Activated naive CD4-positive, alpha-beta T cell treated with anti-CD3 and anti-CD28 coated beads for 36 hours (primary cell): ENCODE measurements at regions of chr19 and their contacts with region 1.

Region 1: DNA sequence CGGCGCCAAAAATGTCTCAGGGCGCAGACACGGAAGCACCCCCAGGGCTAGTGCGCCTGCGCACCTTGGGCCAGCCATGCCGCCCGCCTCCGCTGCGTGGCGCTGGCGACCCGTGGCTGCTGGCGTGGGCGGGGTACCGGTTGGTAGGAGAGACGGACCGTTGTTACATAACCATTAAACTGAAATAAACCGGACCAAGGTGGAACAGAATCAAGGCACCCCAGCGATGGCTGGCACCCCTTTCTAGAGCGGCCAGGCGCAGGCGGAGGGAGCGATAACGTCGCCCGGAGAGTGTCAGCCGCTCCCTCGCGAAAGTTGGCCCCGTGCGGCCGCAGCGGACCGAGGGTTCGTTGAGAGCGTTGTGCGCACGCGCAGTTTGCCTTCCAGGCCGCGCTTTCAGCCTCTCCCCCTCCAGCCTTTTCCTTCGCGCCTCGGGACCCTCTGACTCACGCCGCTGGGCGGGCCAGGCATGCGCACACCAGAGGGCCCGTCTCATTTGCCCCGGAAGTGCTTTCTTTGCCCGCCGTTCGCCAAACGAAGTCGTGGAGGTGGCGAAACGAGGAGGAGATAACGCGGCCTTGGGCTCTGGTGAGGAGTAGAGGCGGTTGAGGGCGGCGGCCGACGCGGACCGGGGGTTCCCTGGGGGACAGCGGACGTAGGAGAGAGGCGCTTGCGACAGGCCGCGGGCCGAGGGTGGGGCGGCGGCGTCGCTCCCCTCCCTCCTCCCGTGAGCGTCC is at the starts of genes PLEKHJ1 and SF3A2:
- DNase-seq: peak; percentile 98
- H3K4me3 Mint-ChIP-seq: peak within 1 kb of the TSS; percentile 99
- H3K27ac Mint-ChIP-seq: peak within 1 kb of the TSS; percentile 98
- H3K4me1 Mint-ChIP-seq: peaks cover 64% of the 10 kb centered on the region
- H3K27me3 Mint-ChIP-seq: no peaks in the 10 kb centered on the region
- total RNA-seq, gene PLEKHJ1: 56.9 to 60.6 TPM
- total RNA-seq, gene SF3A2: 154 to 158 TPM

Region 2: DNA sequence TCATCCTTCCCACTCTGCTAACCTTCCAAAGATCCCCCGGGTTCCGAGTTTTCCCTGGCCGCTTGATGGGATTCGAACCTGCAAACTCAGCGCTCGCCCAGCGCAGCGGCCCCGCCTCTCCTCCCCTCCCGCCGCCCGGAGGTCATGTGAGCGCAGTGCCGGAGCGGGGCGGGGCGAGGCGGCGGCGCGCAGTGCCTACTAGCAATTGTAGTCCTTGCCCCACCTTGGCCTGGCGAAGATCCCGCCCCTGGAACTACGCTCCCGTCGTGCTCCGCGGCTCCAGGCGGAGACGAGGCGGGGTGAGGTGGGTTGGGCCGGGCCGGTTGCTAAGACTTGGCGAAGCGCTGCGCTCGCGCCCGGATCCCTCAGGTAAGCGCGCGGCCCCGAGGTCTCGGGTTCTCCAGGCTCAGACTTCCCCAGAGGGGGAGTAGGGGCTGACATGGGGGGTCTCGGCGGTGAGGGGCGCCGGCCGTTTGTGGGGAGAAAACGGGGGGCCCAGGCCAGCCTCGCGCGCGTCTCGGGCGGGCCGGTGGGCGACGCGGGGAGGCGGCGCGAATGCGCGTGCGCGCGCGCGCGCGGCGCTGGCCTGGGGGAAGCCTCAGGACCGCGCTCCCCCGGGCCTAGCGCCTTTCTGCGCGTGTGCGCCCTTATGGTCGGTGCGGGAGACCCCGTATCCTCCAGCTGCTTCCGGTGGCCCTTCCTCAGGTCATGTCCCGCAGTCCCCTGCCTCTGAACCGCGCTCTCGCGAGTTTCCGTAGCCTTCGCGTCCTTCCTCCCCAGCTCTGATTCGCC is 331.2 kb before region 1 on chr19 and contains the starts of genes ADAT3 and SCAMP4:
- CTCF ChIA-PET with region 1: no interaction called
- intact Hi-C with region 1: loop called (anchors 2 kb)
- DNase-seq: peak; percentile 99
- H3K4me3 Mint-ChIP-seq: peak within 1 kb of the TSS; percentile 89
- H3K27ac Mint-ChIP-seq: peak within 1 kb of the TSS; percentile 89
- H3K4me1 Mint-ChIP-seq: peaks cover 46% of the 10 kb centered on the region
- H3K27me3 Mint-ChIP-seq: no peaks in the 10 kb centered on the region
- total RNA-seq, gene ADAT3: 3.0 to 3.4 TPM
- total RNA-seq, gene SCAMP4: 12.1 to 14.5 TPM

Region 3: GRCh38 chr19:2084993-2085720 is 151.3 kb before region 1 on chr19:
- CTCF ChIA-PET with region 1: no interaction called
- intact Hi-C with region 1: no loop called
- DNase-seq: peak; percentile 97
- H3K4me3 Mint-ChIP-seq: peak overlapping the region; percentile 93
- H3K27ac Mint-ChIP-seq: peak overlapping the region; percentile 98
- H3K4me1 Mint-ChIP-seq: peaks cover 65% of the 10 kb centered on the region
- H3K27me3 Mint-ChIP-seq: no peaks in the 10 kb centered on the region

Region 4: DNA sequence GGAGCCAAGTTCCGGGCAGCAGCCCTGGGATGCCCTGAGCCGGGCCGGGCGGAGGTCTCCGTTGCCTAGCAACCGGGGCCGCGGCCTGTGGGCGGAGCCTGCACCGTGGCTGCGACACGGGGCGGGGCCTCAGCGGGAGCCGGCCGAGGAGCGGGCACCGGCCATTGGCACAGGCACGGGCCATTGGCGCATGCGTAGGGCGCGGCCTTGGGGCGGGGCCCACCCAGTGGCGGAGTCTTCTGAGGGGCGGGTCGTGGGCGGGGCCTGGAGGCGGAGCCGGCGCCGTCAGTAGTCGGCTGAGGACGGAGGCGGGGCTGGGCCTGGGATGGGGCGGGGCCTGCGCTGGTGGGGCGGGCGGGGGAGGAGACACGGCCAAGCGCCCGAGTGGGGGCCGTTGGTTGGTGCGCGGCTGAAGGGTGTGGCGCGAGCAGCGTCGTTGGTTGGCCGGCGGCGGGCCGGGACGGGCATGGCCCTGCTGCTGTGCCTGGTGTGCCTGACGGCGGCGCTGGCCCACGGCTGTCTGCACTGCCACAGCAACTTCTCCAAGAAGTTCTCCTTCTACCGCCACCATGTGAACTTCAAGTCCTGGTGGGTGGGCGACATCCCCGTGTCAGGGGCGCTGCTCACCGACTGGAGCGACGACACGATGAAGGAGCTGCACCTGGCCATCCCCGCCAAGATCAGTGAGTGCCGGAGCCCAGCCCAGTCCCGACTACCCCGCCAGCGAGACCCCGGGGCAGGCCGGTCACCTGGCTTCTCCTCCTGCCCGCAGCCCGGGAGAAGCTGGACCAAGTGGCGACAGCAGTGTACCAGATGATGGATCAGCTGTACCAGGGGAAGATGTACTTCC is 139.8 kb before region 1 on chr19 and contains the start of gene IZUMO4:
- CTCF ChIA-PET with region 1: no interaction called
- intact Hi-C with region 1: loop called (anchors 1 kb)
- DNase-seq: peak; percentile 100
- H3K4me3 Mint-ChIP-seq: peak within 1 kb of the TSS; percentile 94
- H3K27ac Mint-ChIP-seq: peak within 1 kb of the TSS; percentile 92
- H3K4me1 Mint-ChIP-seq: peaks cover 36% of the 10 kb centered on the region
- H3K27me3 Mint-ChIP-seq: no peaks in the 10 kb centered on the region
- total RNA-seq, gene IZUMO4: 13.1 to 14.2 TPM

Region 5: GRCh38 chr19:2261438-2262172 is 25.1 kb after region 1 on chr19:
- CTCF ChIA-PET with region 1: interaction called, 10 read pairs
- intact Hi-C with region 1: loop called (anchors 1 kb)
- DNase-seq: peak; percentile 78
- H3K4me3 Mint-ChIP-seq: no peak overlapping the region
- H3K27ac Mint-ChIP-seq: no peak overlapping the region
- H3K4me1 Mint-ChIP-seq: peaks cover 29% of the 10 kb centered on the region
- H3K27me3 Mint-ChIP-seq: no peaks in the 10 kb centered on the region

Region 6: DNA sequence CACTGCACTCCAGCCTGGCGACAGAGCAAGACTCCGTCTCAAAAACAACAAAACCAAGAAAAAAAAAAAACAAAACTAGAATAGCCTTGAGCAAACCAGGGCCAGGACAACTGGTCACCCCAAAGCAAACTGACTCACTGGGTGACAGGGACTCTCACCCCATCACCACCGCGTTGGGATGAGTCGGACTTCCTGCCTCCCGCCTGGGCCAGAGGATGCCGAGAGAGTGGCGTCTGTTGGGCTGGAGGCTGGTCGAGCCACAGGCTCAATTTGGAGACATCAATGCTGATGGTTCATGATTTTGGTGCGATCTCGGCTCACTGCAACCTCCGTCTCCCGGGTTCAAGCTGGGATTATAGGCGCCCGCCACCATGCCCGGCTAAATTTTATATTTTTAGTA is 135.2 kb after region 1 on chr19:
- CTCF ChIA-PET with region 1: no interaction called
- intact Hi-C with region 1: no loop called
- DNase-seq: no peak
- H3K4me3 Mint-ChIP-seq: no peak overlapping the region
- H3K27ac Mint-ChIP-seq: no peak overlapping the region
- H3K4me1 Mint-ChIP-seq: no peaks in the 10 kb centered on the region
- H3K27me3 Mint-ChIP-seq: no peaks in the 10 kb centered on the region

Region 7: DNA sequence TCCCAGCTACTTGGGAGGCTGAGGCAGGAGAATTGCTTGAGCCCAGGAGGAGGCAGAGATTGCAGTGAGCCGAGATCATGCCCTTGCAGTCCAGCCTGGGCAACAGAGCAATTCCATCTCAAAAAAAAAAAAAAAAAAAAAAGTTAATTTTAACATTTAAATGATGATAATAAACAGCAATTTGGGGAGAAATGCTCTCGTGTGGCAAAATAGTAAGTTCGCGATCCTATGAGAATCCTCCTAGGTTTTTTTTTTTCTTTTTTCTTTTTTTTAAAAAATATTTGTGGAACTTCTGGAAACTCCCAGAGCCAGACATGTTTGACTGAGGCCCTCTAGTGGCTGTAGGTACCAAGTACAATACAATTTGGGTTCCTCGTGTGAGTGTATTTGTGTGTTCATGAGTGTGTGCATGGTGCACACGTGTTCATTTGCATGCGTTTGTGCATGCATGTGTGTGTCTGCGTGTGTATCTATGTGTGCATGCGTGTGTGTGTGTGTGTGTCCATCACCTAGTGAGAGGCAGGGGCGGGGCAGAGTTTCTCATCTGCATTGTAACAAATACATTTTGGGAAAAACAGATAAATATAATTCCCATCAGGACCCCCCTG is 154.7 kb after region 1 on chr19:
- CTCF ChIA-PET with region 1: interaction called, 6 read pairs
- intact Hi-C with region 1: loop called (anchors 1 kb)
- DNase-seq: peak; percentile 56
- H3K4me3 Mint-ChIP-seq: no peak overlapping the region
- H3K27ac Mint-ChIP-seq: no peak overlapping the region
- H3K4me1 Mint-ChIP-seq: peaks cover 15% of the 10 kb centered on the region
- H3K27me3 Mint-ChIP-seq: no peaks in the 10 kb centered on the region

Region 8: DNA sequence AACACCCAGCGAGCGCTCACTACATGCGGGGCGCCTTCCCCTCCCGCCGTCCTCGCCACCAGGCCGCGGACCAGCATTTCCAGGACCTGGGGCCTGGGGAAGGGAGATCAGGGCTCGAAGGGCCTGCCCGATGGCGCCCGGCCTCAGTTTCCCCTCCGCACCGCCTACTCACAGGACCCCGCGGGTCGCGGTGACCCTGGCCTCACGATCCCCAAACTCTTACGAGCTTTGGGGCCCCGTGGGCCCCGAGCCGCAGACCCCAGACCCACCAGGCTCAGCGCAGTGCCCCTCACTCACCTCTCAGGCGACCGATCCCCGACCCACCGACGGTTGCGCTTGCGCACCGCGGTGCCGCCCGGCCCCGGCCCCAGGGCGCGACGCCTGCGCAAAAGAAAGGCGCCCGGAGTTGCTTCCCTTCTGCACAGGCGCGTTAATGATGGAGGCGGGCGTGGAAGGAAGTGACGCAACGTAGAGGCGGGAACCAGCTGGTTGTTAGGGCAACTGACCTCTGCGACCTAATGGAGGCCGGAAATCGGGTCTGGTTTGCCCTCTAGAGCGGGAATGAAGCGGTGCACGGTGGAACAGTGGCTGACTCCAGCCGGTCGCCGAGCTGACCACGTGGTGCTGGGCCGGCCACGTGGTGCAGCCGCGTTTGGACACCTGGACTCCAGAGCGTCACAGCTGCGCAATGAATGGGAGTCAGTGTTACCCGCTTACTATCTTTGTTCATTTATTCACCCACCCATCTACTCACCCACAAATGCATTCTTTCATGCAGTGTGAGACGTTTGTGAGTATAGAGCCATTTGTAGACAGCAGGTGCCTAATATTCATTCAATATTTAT is 546.7 kb after region 1 on chr19 and contains the start of gene SGTA:
- CTCF ChIA-PET with region 1: no interaction called
- intact Hi-C with region 1: loop called (anchors 1 kb)
- DNase-seq: peak; percentile 99
- H3K4me3 Mint-ChIP-seq: peak within 1 kb of the TSS; percentile 94
- H3K27ac Mint-ChIP-seq: peak within 1 kb of the TSS; percentile 91
- H3K4me1 Mint-ChIP-seq: peaks cover 65% of the 10 kb centered on the region
- H3K27me3 Mint-ChIP-seq: no peaks in the 10 kb centered on the region
- total RNA-seq, gene SGTA: 44.3 to 44.6 TPM